Esophagus squamous epithelium (tissue), 5 donors: ENCODE measurements at regions of chr11 and their contacts with region 1.

Region 1: GRCh38 chr11:72483412-72484186 is 49.3 kb upstream of the CLPB start:
- DNase-seq: no peak
- H3K4me3 ChIP-seq: no peak overlapping the region
- H3K27ac ChIP-seq: peak overlapping the region in 2 of 4 donors; percentile 54 to 80
- H3K4me1 ChIP-seq: peaks cover 0 to 9% (median 7%) of the 10 kb centered on the region in 3 donors
- H3K27me3 ChIP-seq: peaks cover 0 to 7% (median 0%) of the 10 kb centered on the region in 4 donors
- CTCF ChIP-seq: peak in 1 of 6 experiments; percentile 24
- POLR2A ChIP-seq: no peak

Region 2: GRCh38 chr11:72553706-72554105 is 70.1 kb after region 1 on chr11:
- intact Hi-C with region 1: loop called (anchors 10 kb)
- DNase-seq: no peak
- H3K4me3 ChIP-seq: no peak overlapping the region
- H3K27ac ChIP-seq: no peak overlapping the region
- H3K4me1 ChIP-seq: no peaks in the 10 kb centered on the region
- H3K27me3 ChIP-seq: peaks cover 0 to 15% (median 0%) of the 10 kb centered on the region in 4 donors
- CTCF ChIP-seq: no peak
- POLR2A ChIP-seq: no peak

Region 3: DNA sequence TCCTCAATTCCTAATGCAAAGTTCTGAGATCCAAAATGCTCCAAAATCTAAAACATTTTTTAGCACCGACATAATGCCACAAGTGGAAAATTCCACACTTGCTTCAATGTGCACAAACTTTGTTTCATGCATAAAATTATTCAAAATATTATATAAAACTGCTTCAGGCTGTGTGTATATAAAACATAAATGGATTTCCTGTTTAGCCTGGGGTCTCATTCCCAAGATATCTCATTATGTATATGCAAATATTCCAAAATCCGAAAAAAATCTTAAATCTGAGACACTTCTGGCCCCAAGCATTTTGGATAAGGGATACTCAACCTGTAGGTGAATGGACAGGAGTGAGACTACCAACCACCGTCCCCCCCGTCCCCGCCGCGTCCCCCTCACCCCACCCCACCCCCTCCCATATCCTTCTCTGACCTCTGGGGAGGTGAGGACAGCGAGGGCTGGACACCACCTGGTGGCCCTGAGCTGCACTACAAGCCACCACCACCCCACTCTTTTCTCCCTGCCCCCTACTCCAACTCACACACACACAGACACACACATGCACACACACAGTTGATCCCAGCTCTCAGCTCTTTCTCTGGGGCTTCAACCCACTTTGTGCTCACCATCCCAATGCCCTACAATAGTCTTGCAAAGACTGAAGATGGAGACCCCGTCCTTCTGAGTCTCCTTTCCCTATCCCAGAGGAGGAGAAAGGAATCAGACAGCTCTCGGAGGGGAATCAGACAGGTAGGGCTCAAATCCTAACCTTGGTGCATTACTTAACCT is 89.7 kb after region 1 on chr11:
- intact Hi-C with region 1: loop called (anchors 5 kb)
- DNase-seq: no peak
- H3K4me3 ChIP-seq: no peak overlapping the region
- H3K27ac ChIP-seq: no peak overlapping the region
- H3K4me1 ChIP-seq: peaks cover 0 to 20% (median 0%) of the 10 kb centered on the region in 3 donors
- H3K27me3 ChIP-seq: peaks cover 0 to 12% (median 0%) of the 10 kb centered on the region in 4 donors
- CTCF ChIP-seq: peak in 5 of 6 experiments; percentile 15 to 53 (median 37)
- POLR2A ChIP-seq: no peak